ENCODE measurements at regions of chr13 and their contacts with region 1.

Region 1: GRCh38 chr13:113562085-113562749 is 22.3 kb upstream of the TFDP1 start:
- DNase-seq: peak; percentile 57 to 67 (median 58)
- ATAC-seq: peak; percentile 92
- H3K4me3 ChIP-seq: no peak overlapping the region
- H3K27ac ChIP-seq: no peak overlapping the region
- H3K4me1 ChIP-seq: peaks cover 0 to 9% of the 10 kb centered on the region in 2 experiments; a peak in 3 of 5 replicates
- H3K27me3 ChIP-seq: no peaks in the 10 kb centered on the region
- CTCF ChIP-seq: peak; percentile 77 to 81 (median 78)
- EP300 ChIP-seq: no peak
- POLR2A ChIP-seq: no peak
- RAD21 ChIP-seq: peak; percentile 47 to 68

Region 2: GRCh38 chr13:113405481-113406300 is 156.5 kb before region 1 on chr13:
- CTCF ChIA-PET with region 1: no interaction called
- POLR2A ChIA-PET with region 1: no interaction called
- in situ Hi-C with region 1: no loop called
- intact Hi-C with region 1: loop called (anchors 5 kb)
- DNase-seq: peak in 2 of 4 experiments; percentile 26 to 32
- ATAC-seq: peak; percentile 85
- H3K4me3 ChIP-seq: no peak overlapping the region
- H3K27ac ChIP-seq: no peak overlapping the region
- H3K4me1 ChIP-seq: peaks cover 0 to 51% of the 10 kb centered on the region in 2 experiments; a peak in 2 of 5 replicates
- H3K27me3 ChIP-seq: peaks cover 57 to 94% of the 10 kb centered on the region in 2 experiments
- CTCF ChIP-seq: peak; percentile 16 to 27 (median 17); a peak in 2 of 6 replicates
- EP300 ChIP-seq: no peak
- POLR2A ChIP-seq: no peak
- RAD21 ChIP-seq: peak in 1 of 2 experiments; percentile 39; a peak in 1 of 4 replicates

Region 3: DNA sequence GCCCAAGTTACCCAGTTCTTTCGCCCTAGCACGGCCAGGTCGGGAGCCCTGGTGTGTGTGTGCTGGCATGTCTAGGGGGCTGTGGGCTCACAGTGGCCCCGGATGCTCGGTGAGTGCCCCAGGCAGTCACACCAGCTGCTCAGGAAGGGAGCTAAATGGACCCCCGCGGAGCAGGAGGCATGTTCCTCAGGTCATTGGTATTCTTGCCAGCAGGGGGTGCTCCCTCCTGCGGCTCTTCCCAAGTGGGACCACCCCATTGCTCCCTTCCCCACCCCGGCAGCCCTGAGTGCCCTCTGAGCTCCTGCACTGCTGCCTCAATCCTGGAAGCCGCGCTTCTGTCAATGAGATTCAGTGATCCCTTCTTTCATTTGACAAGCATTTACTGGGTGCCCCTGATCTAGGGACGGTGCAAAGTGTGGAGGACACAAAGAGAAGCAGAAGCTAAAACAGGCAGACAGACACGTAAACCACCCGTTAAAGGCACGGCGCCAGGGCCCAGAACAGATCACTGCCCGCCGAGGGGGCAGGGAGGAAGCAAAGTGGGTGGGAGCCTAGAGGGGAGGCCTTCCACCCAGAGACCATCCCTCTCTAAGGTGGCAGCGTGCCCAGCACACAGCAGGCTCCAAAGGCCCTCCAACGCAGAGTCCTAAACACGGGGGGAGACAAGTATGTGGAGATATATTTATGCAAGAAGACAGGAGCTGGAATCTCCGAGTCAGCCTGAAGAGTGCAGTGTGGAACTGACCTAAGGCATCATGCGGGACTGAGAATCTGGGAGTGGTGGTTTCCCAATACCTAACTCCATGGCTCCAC is 103.8 kb before region 1 on chr13:
- CTCF ChIA-PET with region 1: interaction called, 4 read pairs
- POLR2A ChIA-PET with region 1: no interaction called
- in situ Hi-C with region 1: no loop called
- intact Hi-C with region 1: loop called (anchors 1 kb)
- DNase-seq: peak; percentile 17 to 23 (median 18)
- ATAC-seq: peak; percentile 69
- H3K4me3 ChIP-seq: no peak overlapping the region
- H3K27ac ChIP-seq: no peak overlapping the region
- H3K4me1 ChIP-seq: peaks cover 0 to 3% of the 10 kb centered on the region in 2 experiments; a peak in 1 of 5 replicates
- H3K27me3 ChIP-seq: no peaks in the 10 kb centered on the region
- CTCF ChIP-seq: peak; percentile 20 to 54 (median 25); a peak in 4 of 6 replicates
- EP300 ChIP-seq: no peak
- POLR2A ChIP-seq: no peak
- RAD21 ChIP-seq: peak in 1 of 2 experiments; percentile 13; a peak in 1 of 4 replicates

Region 4: GRCh38 chr13:113518076-113518803 is 44.0 kb before region 1 on chr13:
- CTCF ChIA-PET with region 1: no interaction called
- POLR2A ChIA-PET with region 1: no interaction called
- in situ Hi-C with region 1: no loop called
- intact Hi-C with region 1: no loop called
- DNase-seq: no peak
- ATAC-seq: no peak
- H3K4me3 ChIP-seq: no peak overlapping the region
- H3K27ac ChIP-seq: no peak overlapping the region
- H3K4me1 ChIP-seq: no peaks in the 10 kb centered on the region; a peak in 1 of 5 replicates
- H3K27me3 ChIP-seq: no peaks in the 10 kb centered on the region
- CTCF ChIP-seq: no peak
- EP300 ChIP-seq: no peak
- POLR2A ChIP-seq: no peak
- RAD21 ChIP-seq: no peak